Activated naive CD4-positive, alpha-beta T cell treated with anti-CD3 and anti-CD28 coated beads for 36 hours (primary cell): ENCODE measurements at regions of chr16 and their contacts with region 1.

Region 1: DNA sequence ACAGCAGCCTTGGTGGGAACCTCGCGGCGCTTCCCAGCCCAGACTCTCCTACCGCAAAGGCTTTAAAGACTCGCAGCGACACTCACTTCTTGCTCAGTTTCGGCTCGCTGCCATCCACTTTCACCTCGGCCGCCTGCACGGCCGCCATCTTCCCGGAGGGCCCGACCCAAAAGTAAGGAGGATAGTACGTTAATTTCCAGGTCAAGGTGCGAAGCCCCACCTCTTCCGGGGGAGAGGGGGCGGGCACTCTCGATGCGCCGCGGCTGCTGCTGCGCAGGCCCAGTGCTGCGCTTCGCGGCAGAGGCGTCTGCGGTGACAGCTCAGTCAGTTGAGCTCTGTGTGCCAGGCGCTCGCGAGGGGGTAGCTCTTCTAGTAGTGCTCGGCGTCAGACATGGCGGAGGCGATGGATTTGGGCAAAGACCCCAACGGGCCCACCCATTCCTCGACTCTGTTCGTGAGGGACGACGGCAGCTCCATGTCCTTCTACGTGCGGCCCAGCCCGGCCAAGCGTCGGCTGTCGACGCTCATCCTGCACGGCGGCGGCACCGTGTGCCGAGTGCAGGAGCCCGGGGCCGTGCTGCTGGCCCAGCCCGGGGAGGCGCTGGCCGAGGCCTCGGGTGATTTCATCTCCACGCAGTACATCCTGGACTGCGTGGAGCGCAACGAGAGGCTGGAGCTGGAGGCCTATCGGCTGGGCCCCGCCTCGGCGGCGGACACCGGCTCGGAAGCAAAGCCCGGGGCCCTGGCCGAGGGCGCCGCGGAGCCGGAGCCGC is at the starts of genes KARS1 and TERF2IP:
- DNase-seq: peak; percentile 96
- H3K4me3 Mint-ChIP-seq: peak within 1 kb of the TSS; percentile 96
- H3K27ac Mint-ChIP-seq: peak within 1 kb of the TSS; percentile 98
- H3K4me1 Mint-ChIP-seq: peaks cover 62% of the 10 kb centered on the region
- H3K27me3 Mint-ChIP-seq: no peaks in the 10 kb centered on the region
- total RNA-seq, gene KARS1: 371 to 385 TPM
- total RNA-seq, gene TERF2IP: 78.6 to 79.0 TPM

Region 2: DNA sequence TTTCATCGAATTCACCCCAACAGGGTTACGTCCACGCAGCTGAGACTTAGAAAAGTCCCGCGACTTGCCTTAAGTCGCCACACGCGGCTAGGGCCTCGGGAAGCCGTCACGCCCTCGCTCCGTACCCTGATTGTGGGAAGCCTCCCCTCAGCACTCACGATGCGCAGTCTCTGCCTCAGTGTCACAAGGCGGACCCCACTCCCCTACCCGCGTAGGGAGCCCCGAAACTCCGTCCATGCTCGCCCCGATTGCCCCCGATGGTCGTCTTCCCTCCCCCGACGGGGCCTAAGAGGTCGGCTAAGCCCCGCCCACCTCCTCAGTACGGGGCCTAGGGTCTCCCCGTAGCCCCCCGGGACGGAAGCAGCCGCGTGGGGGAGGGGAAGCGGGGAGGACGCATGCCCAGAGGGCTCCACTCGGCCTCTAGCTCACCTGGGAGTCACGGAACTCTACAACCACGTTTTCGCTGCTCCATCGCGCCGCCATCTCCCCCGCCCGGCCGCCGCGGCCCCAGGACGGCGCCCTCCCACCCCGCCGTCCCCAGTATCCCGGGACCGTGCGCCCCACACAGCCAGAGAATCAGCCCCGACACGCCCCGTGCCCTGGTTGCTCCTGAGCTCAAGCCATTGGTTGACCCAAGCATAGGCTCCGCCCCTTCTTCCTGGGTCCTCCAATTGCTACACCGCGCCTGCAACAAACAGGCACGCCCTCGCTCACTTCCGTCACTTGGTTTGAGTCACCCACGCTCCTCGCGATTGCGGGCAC is 663.0 kb before region 1 on chr16 and contains the start of gene WDR59:
- CTCF ChIA-PET with region 1: interaction called, 4 read pairs
- intact Hi-C with region 1: loop called (anchors 5 kb)
- DNase-seq: peak; percentile 100
- H3K4me3 Mint-ChIP-seq: peak within 1 kb of the TSS; percentile 88
- H3K27ac Mint-ChIP-seq: peak within 1 kb of the TSS; percentile 73
- H3K4me1 Mint-ChIP-seq: peaks cover 16% of the 10 kb centered on the region
- H3K27me3 Mint-ChIP-seq: no peaks in the 10 kb centered on the region
- total RNA-seq, gene WDR59: 47.8 to 55.6 TPM

Region 3: GRCh38 chr16:75506567-75506966 is 141.1 kb before region 1 on chr16:
- CTCF ChIA-PET with region 1: no interaction called
- intact Hi-C with region 1: no loop called
- DNase-seq: no peak
- H3K4me3 Mint-ChIP-seq: no peak overlapping the region
- H3K27ac Mint-ChIP-seq: no peak overlapping the region
- H3K4me1 Mint-ChIP-seq: peaks cover 4% of the 10 kb centered on the region
- H3K27me3 Mint-ChIP-seq: peaks cover 3% of the 10 kb centered on the region

Region 4: GRCh38 chr16:75555707-75556430 is 91.8 kb before region 1 on chr16 and contains the start of gene TMEM231:
- CTCF ChIA-PET with region 1: no interaction called
- intact Hi-C with region 1: loop called (anchors 1 kb)
- DNase-seq: peak; percentile 98
- H3K4me3 Mint-ChIP-seq: peak within 1 kb of the TSS; percentile 87
- H3K27ac Mint-ChIP-seq: peak within 1 kb of the TSS; percentile 77
- H3K4me1 Mint-ChIP-seq: peaks cover 5% of the 10 kb centered on the region
- H3K27me3 Mint-ChIP-seq: peaks cover 8% of the 10 kb centered on the region
- total RNA-seq, gene TMEM231: 4.5 to 5.4 TPM

Region 5: GRCh38 chr16:75566040-75566810 is 81.5 kb before region 1 on chr16 and contains the start of gene GABARAPL2:
- CTCF ChIA-PET with region 1: interaction called, 4 read pairs
- intact Hi-C with region 1: loop called (anchors 1 kb)
- DNase-seq: peak; percentile 89
- H3K4me3 Mint-ChIP-seq: peak within 1 kb of the TSS; percentile 98
- H3K27ac Mint-ChIP-seq: peak within 1 kb of the TSS; percentile 94
- H3K4me1 Mint-ChIP-seq: peaks cover 38% of the 10 kb centered on the region
- H3K27me3 Mint-ChIP-seq: peaks cover 3% of the 10 kb centered on the region
- total RNA-seq, gene GABARAPL2: 63.3 to 66.8 TPM

Region 6: GRCh38 chr16:75667503-75667902 is 19.8 kb after region 1 on chr16:
- CTCF ChIA-PET with region 1: no interaction called
- intact Hi-C with region 1: no loop called
- DNase-seq: no peak
- H3K4me3 Mint-ChIP-seq: no peak overlapping the region
- H3K27ac Mint-ChIP-seq: no peak overlapping the region
- H3K4me1 Mint-ChIP-seq: no peaks in the 10 kb centered on the region
- H3K27me3 Mint-ChIP-seq: no peaks in the 10 kb centered on the region

Region 7: DNA sequence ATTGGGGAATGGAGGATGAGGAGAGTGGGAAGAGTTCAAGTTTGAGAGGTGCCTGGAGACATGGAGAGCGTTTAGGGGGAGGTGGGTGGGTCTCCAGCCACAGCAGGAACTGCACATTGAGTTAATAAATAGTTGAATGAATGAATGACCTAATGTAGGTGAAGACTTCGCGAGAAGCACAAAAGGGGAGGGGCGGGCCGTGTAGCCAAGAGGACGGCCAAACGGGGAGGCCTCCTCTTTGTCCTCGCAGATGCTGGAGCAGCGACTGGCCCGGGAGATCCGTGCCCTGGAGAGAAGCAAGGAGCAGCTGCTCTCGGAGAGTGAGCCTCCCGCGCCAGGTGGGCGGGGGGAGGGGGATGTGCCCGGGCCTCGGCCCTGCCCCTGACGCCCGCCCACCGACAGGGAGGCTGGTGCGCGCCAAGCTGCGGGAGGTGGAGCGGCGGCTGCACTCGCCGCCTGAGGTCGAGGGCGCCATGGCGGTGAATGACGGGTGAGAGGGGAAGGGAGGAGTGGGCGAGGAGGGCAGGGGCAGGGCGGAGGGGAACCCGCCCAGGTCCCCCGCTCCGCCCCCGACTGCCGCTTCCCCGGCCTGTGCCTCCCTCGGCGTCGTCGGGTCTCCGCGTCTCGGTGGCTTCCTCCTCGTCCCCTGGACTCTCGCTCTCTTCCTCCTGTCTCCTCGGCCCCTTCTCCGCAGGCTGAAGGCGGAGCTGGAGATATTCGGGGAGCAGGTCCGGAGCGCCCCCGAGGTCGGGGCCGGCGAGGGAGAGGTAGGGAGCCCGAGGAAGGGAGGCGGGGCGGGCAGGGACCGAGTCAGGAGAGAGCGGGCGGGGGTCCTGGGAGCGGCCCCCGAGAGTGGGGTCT is 1564.4 kb after region 1 on chr16:
- CTCF ChIA-PET with region 1: no interaction called
- intact Hi-C with region 1: loop called (anchors 1 kb)
- DNase-seq: peak; percentile 81
- H3K4me3 Mint-ChIP-seq: peak overlapping the region; percentile 77
- H3K27ac Mint-ChIP-seq: no peak overlapping the region
- H3K4me1 Mint-ChIP-seq: peaks cover 8% of the 10 kb centered on the region
- H3K27me3 Mint-ChIP-seq: no peaks in the 10 kb centered on the region